BJ (cell line): ENCODE measurements at regions of chr13 and their contacts with region 1.

Region 1: DNA sequence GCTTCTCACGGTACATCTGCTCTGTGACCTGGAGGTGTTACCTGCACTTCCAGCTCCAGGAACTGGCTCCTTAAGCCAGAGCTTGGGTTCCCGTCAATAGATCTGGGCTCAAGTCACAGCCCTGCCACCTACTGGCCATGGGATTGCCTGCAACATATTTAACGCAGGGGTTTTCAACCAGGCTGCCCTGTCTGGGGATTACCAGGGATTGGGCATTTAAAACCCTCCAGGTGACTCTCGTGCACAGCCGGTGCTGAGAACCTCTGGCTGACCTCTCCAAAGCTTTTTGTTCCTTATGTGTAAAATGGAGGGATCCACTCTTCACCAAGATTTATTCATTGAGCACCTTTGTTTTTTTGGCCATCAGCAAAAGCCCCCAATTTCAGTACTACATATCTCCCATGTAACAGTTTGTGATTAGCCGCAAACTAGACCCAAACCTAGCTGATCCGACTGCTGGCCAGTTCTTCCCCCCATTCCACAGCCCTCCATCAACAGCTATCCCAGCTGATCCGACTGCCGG is 76.6 kb upstream of the STK24 start:
- DNase-seq: no peak
- H3K4me3 ChIP-seq: no peak overlapping the region
- H3K27me3 ChIP-seq: no peaks in the 10 kb centered on the region
- CTCF ChIP-seq: peak; percentile 91

Region 2: DNA sequence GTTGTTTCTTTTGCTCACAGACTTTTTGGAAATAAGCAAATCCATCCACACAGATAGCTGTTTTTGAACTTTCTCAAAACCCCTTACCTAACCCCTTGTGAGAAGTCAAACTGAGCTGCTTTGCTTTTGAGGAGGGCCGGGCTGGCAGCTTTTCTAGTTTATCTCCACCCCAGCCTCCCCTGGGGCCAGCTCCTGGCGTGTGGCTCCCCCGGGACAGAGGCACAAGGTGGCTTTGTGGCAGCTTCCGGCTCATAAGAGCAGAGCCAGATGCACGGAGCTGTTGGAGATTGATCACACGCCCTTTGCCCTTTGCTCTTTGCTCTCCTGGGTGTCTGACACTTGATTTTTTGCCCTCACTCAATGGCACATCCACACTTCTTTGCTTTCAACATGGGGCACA is 451.5 kb before region 1 on chr13:
- CTCF ChIA-PET with region 1: no interaction called
- POLR2A ChIA-PET with region 1: no interaction called
- DNase-seq: no peak
- H3K4me3 ChIP-seq: no peak overlapping the region
- H3K27me3 ChIP-seq: no peaks in the 10 kb centered on the region
- CTCF ChIP-seq: no peak

Region 3: GRCh38 chr13:98445340-98446233 is 207.9 kb before region 1 on chr13:
- CTCF ChIA-PET with region 1: interaction called, 91 read pairs
- POLR2A ChIA-PET with region 1: no interaction called
- DNase-seq: no peak
- H3K4me3 ChIP-seq: no peak overlapping the region
- H3K27me3 ChIP-seq: no peaks in the 10 kb centered on the region
- CTCF ChIP-seq: peak; percentile 99

Region 4: DNA sequence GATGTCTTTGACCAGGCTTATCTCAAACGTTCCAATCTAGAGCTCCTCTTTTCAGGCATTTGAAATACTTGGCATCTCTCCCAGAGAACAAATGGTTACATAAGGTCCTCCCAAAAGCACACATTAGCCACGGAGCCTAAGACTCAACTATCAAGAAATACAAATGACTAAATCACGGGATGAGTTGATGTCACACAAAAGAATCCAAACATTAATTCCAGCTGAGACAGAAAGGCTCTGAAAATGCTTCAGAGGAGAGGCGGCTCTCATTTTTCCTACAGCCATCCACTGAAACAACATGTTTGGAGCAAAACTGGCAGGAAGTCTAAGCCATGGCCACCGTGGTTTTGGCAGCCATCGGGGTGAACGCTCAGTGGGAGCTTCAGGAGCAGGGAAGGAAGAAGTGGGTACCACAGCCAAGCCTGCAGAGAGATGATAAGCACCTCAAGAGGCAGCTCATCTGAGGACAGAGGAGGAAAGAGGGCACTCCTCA is 199.1 kb before region 1 on chr13:
- CTCF ChIA-PET with region 1: interaction called, 10 read pairs
- POLR2A ChIA-PET with region 1: no interaction called
- DNase-seq: peak; percentile 87
- H3K4me3 ChIP-seq: no peak overlapping the region
- H3K27me3 ChIP-seq: no peaks in the 10 kb centered on the region
- CTCF ChIP-seq: no peak

Region 5: GRCh38 chr13:98484289-98485219 is 169.0 kb before region 1 on chr13:
- CTCF ChIA-PET with region 1: interaction called, 10 read pairs
- POLR2A ChIA-PET with region 1: no interaction called
- DNase-seq: peak; percentile 88
- H3K4me3 ChIP-seq: no peak overlapping the region
- H3K27me3 ChIP-seq: no peaks in the 10 kb centered on the region
- CTCF ChIP-seq: no peak

Region 6: DNA sequence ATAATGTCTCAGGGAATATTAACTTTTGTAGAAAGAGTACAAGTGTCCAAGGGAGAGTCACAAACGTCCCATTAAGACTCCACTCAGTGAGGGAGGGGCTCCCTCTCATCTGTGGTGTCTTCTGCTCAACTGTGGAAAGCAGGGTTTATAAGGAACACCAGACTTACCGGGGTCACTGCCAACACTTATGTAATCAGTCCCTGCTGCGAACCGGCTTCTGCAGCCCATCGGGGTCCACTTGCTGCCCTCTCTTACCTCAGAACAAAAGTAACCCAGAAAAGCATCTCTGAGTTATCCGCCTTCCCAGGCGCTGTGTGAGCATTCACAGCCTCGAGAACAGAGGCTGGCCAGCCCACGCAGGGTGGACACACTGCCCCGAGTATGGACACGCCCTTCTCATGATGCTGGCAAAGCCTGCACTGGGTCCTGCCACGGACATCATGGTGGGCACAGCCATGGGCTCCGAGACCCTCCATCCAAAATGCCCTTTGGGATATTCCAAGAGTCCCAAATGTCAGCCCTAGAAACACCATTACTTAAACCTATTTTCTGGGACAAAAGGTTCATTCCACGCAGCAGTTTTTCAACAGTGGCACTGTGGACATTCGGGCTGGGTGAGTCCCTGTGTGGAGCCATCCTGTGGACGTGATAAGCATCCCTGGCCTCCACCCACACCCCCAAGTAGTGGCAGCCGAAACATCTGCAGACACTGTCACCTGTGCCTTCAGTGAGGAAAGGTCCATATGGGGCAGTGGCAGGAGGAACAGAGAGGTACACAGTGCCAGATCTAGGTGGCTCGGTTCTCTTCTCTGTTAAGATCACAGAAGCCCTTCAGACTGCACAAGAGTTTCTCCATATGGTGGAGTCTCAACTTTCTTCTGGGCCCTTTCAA is 140.5 kb before region 1 on chr13:
- CTCF ChIA-PET with region 1: no interaction called
- POLR2A ChIA-PET with region 1: no interaction called
- DNase-seq: no peak
- H3K4me3 ChIP-seq: no peak overlapping the region
- H3K27me3 ChIP-seq: no peaks in the 10 kb centered on the region
- CTCF ChIP-seq: no peak

Region 7: GRCh38 chr13:98581971-98582680 is 71.4 kb before region 1 on chr13:
- CTCF ChIA-PET with region 1: interaction called, 15 read pairs
- POLR2A ChIA-PET with region 1: no interaction called
- DNase-seq: no peak
- H3K4me3 ChIP-seq: no peak overlapping the region
- H3K27me3 ChIP-seq: no peaks in the 10 kb centered on the region
- CTCF ChIP-seq: no peak

Region 8: DNA sequence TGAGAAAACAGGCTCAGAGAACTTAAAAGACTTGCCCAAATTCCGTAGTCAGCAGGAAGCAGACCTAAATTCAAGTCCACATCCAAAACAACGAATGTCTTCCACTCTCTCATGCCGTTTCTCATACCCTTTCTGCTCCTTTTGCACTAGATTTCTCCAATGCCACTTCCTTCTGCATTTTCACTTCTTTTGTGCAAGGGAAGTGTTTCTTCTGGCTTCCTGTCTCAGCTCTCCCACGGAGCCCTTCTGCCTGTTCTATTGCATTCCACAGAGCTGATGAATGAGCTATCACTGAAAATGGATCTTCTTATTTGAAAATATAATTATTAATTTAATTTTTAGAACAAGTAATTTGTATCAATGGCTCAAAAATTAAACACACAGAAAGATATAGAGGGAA is 20.6 kb before region 1 on chr13:
- CTCF ChIA-PET with region 1: interaction called, 16 read pairs
- POLR2A ChIA-PET with region 1: no interaction called
- DNase-seq: no peak
- H3K4me3 ChIP-seq: no peak overlapping the region
- H3K27me3 ChIP-seq: 0 out of 2 replicates have a peak, but pooled peaks cover 1% of the 10 kb centered on the region
- CTCF ChIP-seq: no peak